ENCODE measurements at regions of chr1 and their contacts with region 1.

Region 1: DNA sequence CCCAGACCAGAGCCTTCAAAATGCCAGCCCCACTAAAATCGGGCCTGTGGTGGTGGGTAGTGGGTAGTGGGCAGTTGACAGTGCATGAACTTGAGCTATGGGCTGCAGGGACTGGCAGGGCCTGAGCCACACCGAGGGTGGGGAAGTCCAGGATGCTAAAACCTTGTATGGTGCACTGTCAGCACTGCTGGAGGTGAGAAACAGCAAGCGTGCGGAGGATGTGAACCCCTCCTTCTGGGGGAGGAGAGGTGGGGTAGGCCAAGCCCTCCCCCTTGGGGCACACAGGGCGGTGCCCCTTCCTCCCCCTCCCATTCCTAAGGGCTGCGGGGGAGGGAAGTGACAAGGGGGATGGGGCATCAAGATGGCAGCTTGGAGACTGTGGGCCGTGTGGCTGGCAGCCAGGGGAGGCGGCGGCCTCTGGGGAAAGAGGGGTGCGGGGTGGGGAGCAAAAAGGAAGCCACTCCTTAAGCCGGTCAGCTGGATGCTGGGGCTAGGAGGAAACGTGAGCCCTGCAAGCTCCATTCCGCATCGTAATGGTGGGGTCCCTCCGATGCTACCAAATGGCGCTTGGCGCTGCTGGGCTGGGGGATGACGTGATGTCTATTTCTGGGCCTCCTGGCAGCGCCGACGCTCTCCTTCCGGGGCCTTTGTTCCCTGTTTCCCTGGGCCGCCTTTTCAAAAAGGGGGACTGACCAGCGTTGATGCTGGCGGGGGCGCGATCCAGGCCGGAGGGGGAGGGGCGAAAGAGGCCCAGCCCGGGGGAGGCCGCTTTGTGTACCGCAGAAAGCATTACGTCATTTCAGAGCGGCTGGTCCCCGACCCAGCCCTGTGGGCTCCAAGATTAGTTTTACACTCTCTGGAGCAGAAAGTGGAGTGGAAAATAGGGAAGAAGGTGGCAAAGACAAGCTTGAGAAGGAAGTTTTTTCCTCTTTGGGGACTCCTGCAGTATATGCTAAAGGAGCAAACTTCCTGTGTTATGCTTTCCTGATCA is 809 bp downstream of the SYT11 start:
- DNase-seq: no peak
- H3K4me3 ChIP-seq: peak overlapping the region; percentile 50 to 56 (median 54)
- H3K27ac ChIP-seq: peak overlapping the region; percentile 79 to 92 (median 88)
- H3K4me1 ChIP-seq: peaks cover 22 to 47% (median 43%) of the 10 kb centered on the region in 4 donors
- H3K27me3 ChIP-seq: no peaks in the 10 kb centered on the region
- CTCF ChIP-seq: no peak
- EP300 ChIP-seq: no peak
- POLR2A ChIP-seq: no peak

Region 2: GRCh38 chr1:155911156-155912055 is 51.2 kb after region 1 on chr1 and contains the start of gene RIT1:
- intact Hi-C with region 1: loop called (anchors 10 kb)
- DNase-seq: peak; percentile 94
- H3K4me3 ChIP-seq: peak within 1 kb of the TSS; percentile 66 to 90 (median 84)
- H3K27ac ChIP-seq: peak within 1 kb of the TSS; percentile 90 to 98 (median 92)
- H3K4me1 ChIP-seq: peaks cover 19 to 38% (median 31%) of the 10 kb centered on the region in 4 donors
- H3K27me3 ChIP-seq: no peaks in the 10 kb centered on the region
- CTCF ChIP-seq: peak in 2 of 3 experiments; percentile 29 to 42
- EP300 ChIP-seq: no peak
- POLR2A ChIP-seq: peak; percentile 43
- total RNA-seq, gene RIT1: 23.0 to 36.8 (median 32.3) TPM